MCF 10A (cell line): ENCODE measurements at regions of chr20 and their contacts with region 1.

Region 1: GRCh38 chr20:57383447-57384347 is 7.5 kb upstream of the RBM38 start:
- DNase-seq: no peak
- H3K4me3 Mint-ChIP-seq: no peak overlapping the region
- H3K27ac Mint-ChIP-seq: no peak overlapping the region
- H3K4me1 Mint-ChIP-seq: no peaks in the 10 kb centered on the region
- H3K27me3 Mint-ChIP-seq: no peaks in the 10 kb centered on the region
- CTCF ChIP-seq: no peak

Region 2: DNA sequence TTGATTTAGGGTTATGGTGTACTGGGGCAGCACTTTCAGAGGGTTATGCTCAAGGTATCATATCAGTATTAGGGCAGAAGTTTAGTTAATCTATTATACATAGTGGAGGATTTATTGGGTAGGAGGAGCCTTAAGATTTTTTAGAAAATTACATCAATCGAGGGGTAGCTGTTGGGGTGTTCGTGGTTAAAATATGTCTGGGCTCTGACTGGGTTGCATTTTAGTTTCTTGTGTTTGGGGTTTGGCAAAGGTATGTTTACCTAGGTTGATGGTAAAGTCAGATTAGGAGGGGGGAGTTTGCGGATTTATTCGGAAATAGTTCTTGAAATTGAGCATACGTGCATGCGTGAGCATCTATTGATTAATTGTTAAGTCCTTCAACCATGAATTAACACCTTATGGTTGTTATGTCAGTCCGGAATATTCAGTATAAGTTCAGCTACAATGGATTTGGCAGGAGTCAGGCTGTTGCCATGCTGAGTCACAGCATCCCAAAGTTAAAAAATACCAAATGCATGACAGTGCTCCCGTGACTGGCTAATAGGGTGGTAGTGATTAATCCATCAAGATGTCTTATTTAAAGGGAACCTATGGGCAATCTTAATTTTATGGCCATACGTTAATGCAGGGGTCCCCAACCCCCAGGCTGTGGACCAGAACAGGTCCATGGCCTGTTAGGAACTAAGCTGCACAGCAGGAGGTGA is 22.3 kb before region 1 on chr20:
- CTCF ChIA-PET with region 1: interaction called, 56 read pairs
- POLR2A ChIA-PET with region 1: interaction called, 4 read pairs
- intact Hi-C with region 1: no loop called
- DNase-seq: peak; percentile 60
- H3K4me3 Mint-ChIP-seq: no peak overlapping the region
- H3K27ac Mint-ChIP-seq: no peak overlapping the region
- H3K4me1 Mint-ChIP-seq: no peaks in the 10 kb centered on the region
- H3K27me3 Mint-ChIP-seq: no peaks in the 10 kb centered on the region
- CTCF ChIP-seq: no peak

Region 3: DNA sequence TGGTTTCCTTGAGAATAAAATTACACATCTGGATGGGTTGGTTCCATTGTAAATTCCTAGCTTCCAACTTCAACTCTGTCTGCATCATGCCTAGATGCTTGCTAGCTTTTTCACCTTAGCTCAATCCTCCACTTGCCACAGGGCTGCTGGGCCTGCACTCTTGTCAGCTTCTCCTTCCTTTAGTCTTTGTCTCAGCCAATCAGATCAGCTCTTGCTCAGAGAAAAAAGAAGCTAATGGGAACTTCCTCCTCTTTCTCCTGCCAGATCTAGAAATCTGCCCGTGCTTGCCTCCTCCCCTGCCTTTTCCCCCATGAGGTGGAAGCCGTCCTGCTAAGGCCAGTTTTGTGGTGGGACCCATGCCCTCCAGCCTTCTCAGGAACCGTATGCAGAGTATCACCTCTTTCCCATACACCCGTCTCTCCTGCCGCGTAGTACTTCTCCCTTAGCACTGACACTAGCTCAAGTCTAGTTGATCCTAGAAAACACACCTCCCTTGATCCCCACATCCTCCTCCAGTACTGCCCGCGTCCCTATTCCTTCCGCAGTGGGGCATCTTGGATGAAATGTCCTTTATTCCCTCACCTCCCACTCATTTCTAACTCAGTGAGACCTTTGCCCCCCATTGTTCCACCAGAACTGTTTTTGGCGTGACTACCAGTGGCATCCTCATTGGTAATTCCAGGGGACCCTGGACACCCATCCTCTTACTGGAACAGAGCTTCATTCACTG is 13.9 kb before region 1 on chr20:
- CTCF ChIA-PET with region 1: interaction called, 56 read pairs
- POLR2A ChIA-PET with region 1: no interaction called
- intact Hi-C with region 1: no loop called
- DNase-seq: no peak
- H3K4me3 Mint-ChIP-seq: no peak overlapping the region
- H3K27ac Mint-ChIP-seq: peak overlapping the region; percentile 67
- H3K4me1 Mint-ChIP-seq: no peaks in the 10 kb centered on the region
- H3K27me3 Mint-ChIP-seq: no peaks in the 10 kb centered on the region
- CTCF ChIP-seq: no peak

Region 4: GRCh38 chr20:57429580-57430200 is 46.0 kb after region 1 on chr20:
- CTCF ChIA-PET with region 1: interaction called, 14 read pairs
- POLR2A ChIA-PET with region 1: no interaction called
- intact Hi-C with region 1: no loop called
- DNase-seq: peak; percentile 47
- H3K4me3 Mint-ChIP-seq: no peak overlapping the region
- H3K27ac Mint-ChIP-seq: no peak overlapping the region
- H3K4me1 Mint-ChIP-seq: peaks cover 7% of the 10 kb centered on the region
- H3K27me3 Mint-ChIP-seq: no peaks in the 10 kb centered on the region
- CTCF ChIP-seq: no peak

Region 5: DNA sequence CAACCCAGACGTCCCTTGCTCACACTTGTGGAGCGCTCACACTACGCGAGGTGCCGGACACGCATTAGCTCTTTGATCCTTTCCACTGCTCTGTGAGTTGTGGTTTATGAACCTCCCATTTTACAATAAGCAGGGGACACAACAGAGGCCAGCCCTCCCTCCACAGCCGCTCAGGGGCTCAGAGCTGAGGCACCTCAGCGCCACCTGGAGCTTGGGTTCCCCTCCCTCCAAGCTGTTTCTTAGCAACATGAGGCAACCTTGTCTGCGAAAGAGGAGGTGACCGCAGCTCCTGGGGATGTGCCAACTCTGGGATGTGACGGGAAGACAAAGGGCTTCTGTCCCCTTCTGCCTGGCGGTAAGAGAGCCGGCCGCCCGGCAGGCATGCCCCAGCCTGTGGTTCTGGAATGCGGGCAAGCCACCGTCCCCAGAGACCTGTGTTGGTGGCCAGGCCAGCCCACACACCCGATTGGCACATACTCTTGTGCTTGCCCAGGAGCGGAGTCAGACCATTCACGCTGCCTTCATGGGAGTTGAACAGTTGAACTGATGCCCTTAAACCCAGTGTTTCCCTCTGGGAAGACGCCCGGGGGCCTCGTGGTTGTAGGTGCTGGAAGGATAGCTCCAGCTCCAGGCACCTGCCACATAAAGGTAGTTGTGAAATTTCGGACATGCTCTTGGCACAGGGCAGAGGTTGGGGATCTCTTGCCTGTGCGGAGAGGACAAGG is 52.0 kb after region 1 on chr20:
- CTCF ChIA-PET with region 1: interaction called, 4 read pairs
- POLR2A ChIA-PET with region 1: no interaction called
- intact Hi-C with region 1: loop called (anchors 5 kb)
- DNase-seq: peak; percentile 88
- H3K4me3 Mint-ChIP-seq: no peak overlapping the region
- H3K27ac Mint-ChIP-seq: no peak overlapping the region
- H3K4me1 Mint-ChIP-seq: no peaks in the 10 kb centered on the region
- H3K27me3 Mint-ChIP-seq: no peaks in the 10 kb centered on the region
- CTCF ChIP-seq: no peak

Region 6: GRCh38 chr20:57493091-57493615 is 109.5 kb after region 1 on chr20:
- CTCF ChIA-PET with region 1: interaction called, 40 read pairs
- POLR2A ChIA-PET with region 1: interaction called, 3 read pairs
- intact Hi-C with region 1: loop called (anchors 1 kb)
- DNase-seq: no peak
- H3K4me3 Mint-ChIP-seq: no peak overlapping the region
- H3K27ac Mint-ChIP-seq: no peak overlapping the region
- H3K4me1 Mint-ChIP-seq: no peaks in the 10 kb centered on the region
- H3K27me3 Mint-ChIP-seq: peaks cover 78% of the 10 kb centered on the region
- CTCF ChIP-seq: no peak

Region 7: GRCh38 chr20:57498425-57499400 is 115.0 kb after region 1 on chr20:
- CTCF ChIA-PET with region 1: interaction called, 40 read pairs
- POLR2A ChIA-PET with region 1: interaction called, 3 read pairs
- intact Hi-C with region 1: loop called (anchors 1 kb)
- DNase-seq: peak; percentile 37
- H3K4me3 Mint-ChIP-seq: no peak overlapping the region
- H3K27ac Mint-ChIP-seq: no peak overlapping the region
- H3K4me1 Mint-ChIP-seq: no peaks in the 10 kb centered on the region
- H3K27me3 Mint-ChIP-seq: peaks cover 66% of the 10 kb centered on the region
- CTCF ChIP-seq: peak; percentile 20

Region 8: DNA sequence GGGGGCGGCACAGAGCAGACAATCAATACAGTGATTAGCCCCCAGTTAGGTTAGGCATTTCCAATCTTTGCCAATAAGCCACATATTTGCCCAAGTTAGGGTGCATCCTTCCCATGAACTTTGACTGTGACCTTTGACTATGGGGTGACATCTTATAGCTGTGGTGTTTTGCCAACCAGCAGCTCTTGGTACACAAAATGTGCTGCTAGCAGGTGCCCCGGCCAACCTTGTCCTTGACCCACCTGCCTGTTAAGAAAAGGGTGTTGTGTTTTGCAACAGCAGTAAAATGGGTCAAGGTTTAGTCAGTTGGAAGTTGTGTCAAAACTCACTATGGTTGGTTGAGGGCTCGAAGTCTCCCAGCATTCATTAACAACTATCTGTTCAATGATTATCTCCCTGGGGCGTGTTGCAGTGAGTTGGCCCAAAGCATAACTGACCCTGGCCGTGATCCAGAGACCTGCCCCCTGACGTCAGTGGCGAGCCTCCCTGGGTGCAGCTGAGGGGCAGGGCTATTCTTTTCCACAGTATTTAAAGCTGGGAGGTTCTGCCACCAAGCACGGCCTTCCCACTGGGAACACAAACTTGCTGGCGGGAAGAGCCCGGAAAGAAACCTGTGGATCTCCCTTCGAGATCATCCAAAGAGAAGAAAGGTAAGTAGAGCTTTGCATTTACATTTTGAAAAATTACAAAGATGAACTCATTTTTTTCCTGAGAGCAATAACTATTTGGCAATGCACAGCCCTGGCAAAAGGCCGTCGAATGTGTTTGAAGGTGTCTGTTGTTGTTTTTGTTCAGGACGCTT is 177.1 kb after region 1 on chr20 and contains the start of gene PCK1:
- CTCF ChIA-PET with region 1: no interaction called
- POLR2A ChIA-PET with region 1: no interaction called
- intact Hi-C with region 1: no loop called
- DNase-seq: peak; percentile 64
- H3K4me3 Mint-ChIP-seq: no peak within 1 kb of the TSS
- H3K27ac Mint-ChIP-seq: no peak within 1 kb of the TSS
- H3K4me1 Mint-ChIP-seq: peaks cover 6% of the 10 kb centered on the region
- H3K27me3 Mint-ChIP-seq: peaks cover 95% of the 10 kb centered on the region
- CTCF ChIP-seq: no peak
- total RNA-seq, gene PCK1: not detected in 2 replicates